ENCODE measurements at regions of chr14 and their contacts with region 1.

Region 1: DNA sequence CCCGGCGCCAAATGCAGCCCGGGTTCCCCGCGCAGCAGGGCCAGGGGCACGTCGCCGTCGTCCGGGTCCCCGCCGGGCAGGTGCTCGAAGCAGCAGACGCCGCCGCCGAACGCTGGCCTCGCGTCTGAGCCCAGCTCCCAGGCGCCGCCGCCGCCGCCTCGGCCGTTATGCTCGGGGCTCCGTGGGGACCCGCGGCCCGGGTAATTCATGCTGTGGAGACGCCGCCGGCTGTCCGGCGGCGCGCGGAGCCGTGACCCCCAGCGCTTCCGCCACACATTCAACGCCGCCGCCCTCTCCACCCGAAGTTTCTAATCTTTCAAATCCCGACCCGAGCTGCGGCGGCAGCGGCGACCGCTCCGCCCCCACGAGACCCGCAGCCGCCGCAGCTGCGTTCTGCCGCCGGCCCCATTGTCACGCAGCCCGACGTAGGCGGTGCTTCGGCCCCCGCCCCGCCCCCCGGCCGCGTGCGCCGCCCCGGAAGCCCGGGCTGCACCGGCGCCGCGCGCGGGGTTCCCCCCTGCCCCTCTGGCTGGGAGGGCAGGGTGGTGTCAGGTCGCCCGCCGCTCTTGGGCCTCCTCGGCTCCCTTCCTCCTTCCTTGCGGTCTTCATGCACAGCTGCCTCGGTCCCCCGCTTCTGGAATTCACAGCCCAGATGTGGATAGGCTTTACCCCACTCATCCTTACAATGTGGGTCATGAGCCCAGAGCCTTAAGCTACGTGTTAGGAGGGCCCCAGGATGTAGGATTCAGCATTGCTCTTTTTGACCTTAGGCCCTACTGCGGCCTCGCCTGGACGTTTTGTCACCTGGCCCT is at the start of gene DDHD1:
- DNase-seq: peak; percentile 67
- ATAC-seq: peak; percentile 70
- H3K4me3 ChIP-seq: peak within 1 kb of the TSS; percentile 97
- H3K27ac ChIP-seq: no peak within 1 kb of the TSS
- H3K4me1 ChIP-seq: peaks cover 17% of the 10 kb centered on the region
- H3K27me3 ChIP-seq: no peaks in the 10 kb centered on the region
- CTCF ChIP-seq: no peak
- total RNA-seq, gene DDHD1: 10.6 and 10.7 TPM in 2 replicates

Region 2: GRCh38 chr14:52824507-52824906 is 328.6 kb before region 1 on chr14:
- CTCF ChIA-PET with region 1: no interaction called
- POLR2A ChIA-PET with region 1: no interaction called
- intact Hi-C with region 1: loop called (anchors 5 kb)
- DNase-seq: no peak
- ATAC-seq: no peak
- H3K4me3 ChIP-seq: no peak overlapping the region
- H3K27ac ChIP-seq: no peak overlapping the region
- H3K4me1 ChIP-seq: no peaks in the 10 kb centered on the region
- H3K27me3 ChIP-seq: no peaks in the 10 kb centered on the region
- CTCF ChIP-seq: no peak

Region 3: DNA sequence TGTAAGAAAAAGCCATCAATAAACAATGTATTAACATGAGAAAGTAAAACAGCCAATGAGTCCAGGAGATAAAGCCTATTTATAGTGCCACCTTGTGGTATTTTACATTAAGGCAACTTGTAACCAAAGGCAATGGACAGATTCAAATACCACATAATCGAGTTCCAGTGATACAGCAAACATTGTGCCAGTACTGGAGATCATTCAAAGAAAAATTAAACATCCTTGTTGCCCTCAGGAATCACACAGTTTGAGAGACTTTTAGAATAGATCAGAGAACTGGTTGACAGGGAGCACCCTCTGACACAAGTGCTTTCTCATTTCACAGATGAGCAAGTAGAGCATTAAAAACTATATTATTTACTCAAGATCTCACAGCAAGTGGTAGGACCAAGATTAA is 98.1 kb before region 1 on chr14:
- CTCF ChIA-PET with region 1: interaction called, 3 read pairs
- POLR2A ChIA-PET with region 1: no interaction called
- intact Hi-C with region 1: loop called (anchors 5 kb)
- DNase-seq: peak; percentile 78
- ATAC-seq: peak; percentile 95
- H3K4me3 ChIP-seq: no peak overlapping the region
- H3K27ac ChIP-seq: no peak overlapping the region
- H3K4me1 ChIP-seq: peaks cover 1% of the 10 kb centered on the region; the same call in 1 of the 2 replicates
- H3K27me3 ChIP-seq: no peaks in the 10 kb centered on the region
- CTCF ChIP-seq: peak; percentile 94

Region 4: DNA sequence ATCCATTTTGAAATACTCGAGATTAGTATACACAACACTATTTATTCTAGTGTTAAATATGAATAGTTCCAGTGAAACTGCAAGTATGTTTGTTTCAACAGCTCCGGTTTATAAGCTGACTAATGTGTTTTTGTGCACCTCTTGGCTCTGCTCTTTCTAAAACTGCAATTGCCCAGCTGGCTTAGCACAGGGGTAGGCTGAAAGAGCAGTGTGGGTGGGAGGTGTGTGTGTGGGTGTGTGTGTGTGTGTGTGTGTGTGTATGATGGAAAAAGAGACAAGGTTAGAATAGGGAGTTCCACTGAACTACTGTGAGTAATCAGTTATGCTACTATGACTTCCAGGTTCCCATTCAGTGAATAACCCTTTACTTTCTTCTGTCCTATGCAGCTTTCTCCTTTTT is 37.8 kb after region 1 on chr14:
- CTCF ChIA-PET with region 1: interaction called, 4 read pairs
- POLR2A ChIA-PET with region 1: no interaction called
- intact Hi-C with region 1: loop called (anchors 2 kb)
- DNase-seq: peak; percentile 39
- ATAC-seq: peak; percentile 89
- H3K4me3 ChIP-seq: no peak overlapping the region
- H3K27ac ChIP-seq: no peak overlapping the region
- H3K4me1 ChIP-seq: peaks cover 5% of the 10 kb centered on the region; the same call in 1 of the 2 replicates
- H3K27me3 ChIP-seq: no peaks in the 10 kb centered on the region
- CTCF ChIP-seq: no peak

Region 5: DNA sequence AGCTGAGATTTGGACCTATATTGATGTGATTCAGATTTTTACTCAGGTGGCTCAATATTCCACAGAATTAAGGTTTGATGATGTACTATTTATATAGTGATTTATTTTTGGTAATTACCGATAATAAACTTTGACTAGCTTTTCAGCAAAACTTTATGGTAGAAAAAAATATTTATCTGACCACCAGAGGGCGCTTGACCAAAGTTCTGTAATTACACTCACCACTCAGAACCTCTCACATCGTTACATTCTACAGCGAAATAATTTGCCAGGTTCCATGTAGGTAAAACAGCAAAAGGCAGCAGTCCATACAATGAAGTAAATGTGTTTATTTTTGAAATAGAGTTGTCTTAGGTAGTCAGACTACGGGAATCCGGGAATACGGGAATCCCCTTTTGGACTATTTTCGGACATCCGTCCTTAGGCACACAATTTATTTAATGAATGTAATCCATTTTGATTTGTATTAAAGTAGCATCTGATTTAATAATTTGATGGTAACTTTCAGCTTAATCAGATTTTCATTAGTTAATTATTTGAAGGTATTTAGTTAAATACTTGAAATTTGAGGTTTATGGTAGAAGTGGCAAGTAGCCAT is 143.0 kb after region 1 on chr14:
- CTCF ChIA-PET with region 1: interaction called, 5 read pairs
- POLR2A ChIA-PET with region 1: no interaction called
- intact Hi-C with region 1: loop called (anchors 5 kb)
- DNase-seq: peak; percentile 67
- ATAC-seq: peak; percentile 71
- H3K4me3 ChIP-seq: no peak overlapping the region
- H3K27ac ChIP-seq: no peak overlapping the region
- H3K4me1 ChIP-seq: no peaks in the 10 kb centered on the region
- H3K27me3 ChIP-seq: no peaks in the 10 kb centered on the region
- CTCF ChIP-seq: peak; percentile 85

Measured in PC-3 (cell line).